Heart left ventricle (tissue), 16 donors: ENCODE measurements at regions of chr3 and their contacts with region 1.

Region 1: GRCh38 chr3:124272605-124273151 is 280.8 kb upstream of the ROPN1 start:
- DNase-seq: peak in 1 of 5 donors; percentile 33
- ATAC-seq: peak in 1 of 4 donors; percentile 11
- H3K4me3 ChIP-seq: no peak overlapping the region
- H3K27ac ChIP-seq: peak overlapping the region in 10 of 12 donors; percentile 18 to 88 (median 38)
- H3K4me1 ChIP-seq: peaks cover 23 to 76% (median 44%) of the 10 kb centered on the region in 12 donors
- H3K27me3 ChIP-seq: no peaks in the 10 kb centered on the region
- CTCF ChIP-seq: no peak
- POLR2A ChIP-seq: no peak

Region 2: DNA sequence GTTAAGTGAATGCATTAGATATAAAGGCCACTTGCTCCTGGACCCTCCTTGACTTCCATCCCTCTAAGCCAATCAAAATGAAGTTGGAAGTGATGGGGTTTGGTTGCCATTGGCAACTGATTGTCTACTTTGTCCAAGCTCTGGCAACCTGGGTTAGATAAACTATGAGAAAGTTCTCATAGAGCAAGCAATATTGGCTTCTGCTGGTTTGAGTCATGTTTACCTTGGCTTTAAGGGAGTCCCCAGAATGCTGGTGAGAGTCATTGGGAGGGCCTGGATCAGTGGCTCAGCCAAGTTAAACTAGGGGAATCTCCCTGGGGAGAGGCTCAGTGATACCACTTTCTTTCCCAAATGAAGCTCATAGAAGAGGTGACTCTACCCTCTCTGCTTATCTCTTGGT is 104.4 kb before region 1 on chr3:
- intact Hi-C with region 1: loop called in 1 of 10 experiments (anchors 2 kb)
- DNase-seq: no peak
- ATAC-seq: peak; percentile 40 to 84 (median 80)
- H3K4me3 ChIP-seq: no peak overlapping the region
- H3K27ac ChIP-seq: no peak overlapping the region
- H3K4me1 ChIP-seq: peaks cover 0 to 29% (median 5%) of the 10 kb centered on the region in 12 donors
- H3K27me3 ChIP-seq: no peaks in the 10 kb centered on the region
- CTCF ChIP-seq: no peak
- POLR2A ChIP-seq: no peak

Region 3: GRCh38 chr3:124246949-124247348 is 25.7 kb before region 1 on chr3:
- intact Hi-C with region 1: loop called in 4 of 10 experiments (anchors 1 to 2 kb)
- DNase-seq: no peak
- ATAC-seq: no peak
- H3K4me3 ChIP-seq: no peak overlapping the region
- H3K27ac ChIP-seq: peak overlapping the region in 7 of 12 donors; percentile 13 to 95 (median 88)
- H3K4me1 ChIP-seq: peaks cover 10 to 52% (median 35%) of the 10 kb centered on the region in 12 donors
- H3K27me3 ChIP-seq: no peaks in the 10 kb centered on the region
- CTCF ChIP-seq: peak in 10 of 12 donors; percentile 16 to 61 (median 36)
- POLR2A ChIP-seq: no peak